Mammary epithelial cell (primary cell): ENCODE measurements at regions of chr11 and their contacts with region 1.

Region 1: DNA sequence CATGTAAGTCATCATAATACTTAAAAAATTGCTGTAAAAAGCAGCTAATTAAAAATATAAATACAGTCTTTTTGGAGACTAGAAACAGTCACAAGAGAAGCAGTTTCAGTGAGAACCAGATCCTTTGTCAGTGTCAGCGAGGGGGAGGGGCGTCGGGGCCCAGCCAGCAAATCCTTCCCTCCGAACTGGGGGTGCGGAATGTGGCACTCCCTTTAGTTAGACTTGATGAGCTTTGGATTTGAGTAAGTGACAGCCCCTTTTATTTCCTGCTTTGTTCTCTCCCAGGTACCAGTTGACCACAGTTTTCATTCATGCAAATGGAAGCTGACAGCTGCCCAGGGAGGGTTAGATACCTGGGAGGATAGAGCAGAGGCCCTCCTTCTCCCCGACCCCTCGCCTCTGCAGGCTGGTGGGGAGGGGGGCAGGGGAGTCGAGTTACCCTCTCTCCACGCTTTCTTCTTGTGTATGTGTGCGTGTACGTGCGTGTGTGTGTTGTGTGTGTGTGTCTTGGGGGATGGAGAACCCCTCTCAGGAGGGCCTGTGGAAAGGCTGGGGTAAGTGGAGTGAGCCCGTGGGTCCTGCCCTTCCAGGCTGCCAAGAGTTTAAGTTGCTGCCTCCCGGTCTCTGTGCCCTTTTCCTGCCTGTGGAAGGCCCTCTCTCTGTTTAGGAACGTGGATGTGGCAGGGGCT is 38.3 kb downstream of the PTPRJ start:
- DNase-seq: no peak
- H3K4me3 ChIP-seq: no peak overlapping the region
- H3K27ac ChIP-seq: no peak overlapping the region
- H3K4me1 ChIP-seq: no peaks in the 10 kb centered on the region
- H3K27me3 ChIP-seq: no peaks in the 10 kb centered on the region
- CTCF ChIP-seq: no peak

Region 2: GRCh38 chr11:48066881-48067800 is 48.5 kb after region 1 on chr11:
- CTCF ChIA-PET with region 1: interaction called, 14 read pairs
- dilution Hi-C with region 1: no loop called
- in situ Hi-C with region 1: no loop called
- intact Hi-C with region 1: no loop called
- DNase-seq: no peak
- H3K4me3 ChIP-seq: no peak overlapping the region
- H3K27ac ChIP-seq: no peak overlapping the region
- H3K4me1 ChIP-seq: no peaks in the 10 kb centered on the region
- H3K27me3 ChIP-seq: no peaks in the 10 kb centered on the region
- CTCF ChIP-seq: no peak

Region 3: DNA sequence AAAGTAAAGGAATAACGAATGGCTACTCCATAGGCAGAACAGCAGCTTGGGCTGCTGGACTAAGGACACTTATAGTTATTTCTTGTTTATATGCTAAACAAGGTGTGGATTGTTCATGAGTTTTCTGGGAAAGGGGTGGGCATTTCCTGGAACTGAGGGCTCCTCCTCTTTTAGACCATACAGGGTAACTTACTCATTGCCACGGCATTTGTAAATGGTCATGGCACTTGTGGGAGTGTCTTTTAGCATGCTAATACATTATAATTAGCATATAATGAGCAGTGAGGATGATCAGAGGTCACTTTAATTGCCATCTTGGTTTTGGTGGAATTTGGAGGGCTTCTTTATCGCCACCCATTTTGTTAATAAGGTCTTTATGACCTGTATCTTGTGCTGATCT is 251.9 kb after region 1 on chr11:
- CTCF ChIA-PET with region 1: no interaction called
- dilution Hi-C with region 1: no loop called
- in situ Hi-C with region 1: no loop called
- intact Hi-C with region 1: no loop called
- DNase-seq: no peak
- H3K4me3 ChIP-seq: no peak overlapping the region
- H3K27ac ChIP-seq: no peak overlapping the region
- H3K4me1 ChIP-seq: no peaks in the 10 kb centered on the region
- H3K27me3 ChIP-seq: no peaks in the 10 kb centered on the region
- CTCF ChIP-seq: no peak